ENCODE measurements at regions of chr3 and their contacts with region 1.

Region 1: DNA sequence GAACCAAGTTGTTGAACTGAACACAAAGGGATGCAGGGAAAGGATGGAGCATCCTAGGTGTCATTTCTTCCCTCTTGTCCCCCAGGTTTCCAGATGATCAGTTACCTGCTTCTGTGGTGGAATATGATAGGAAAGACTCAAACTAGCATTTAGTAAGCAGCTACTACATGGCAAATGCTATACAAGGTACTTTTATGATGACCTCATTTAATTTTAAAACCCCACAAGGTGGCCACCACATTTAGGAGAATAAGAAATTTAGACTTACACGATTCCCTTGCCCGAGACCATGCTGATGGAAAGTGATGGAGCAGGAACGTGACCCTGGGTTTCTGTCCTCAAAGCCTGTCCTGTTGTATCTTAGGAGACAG is 40.9 kb downstream of the CCR4 start:
- DNase-seq: no peak
- H3K4me3 Mint-ChIP-seq: peak overlapping the region; percentile 31
- H3K27ac Mint-ChIP-seq: peak overlapping the region; percentile 84
- H3K4me1 Mint-ChIP-seq: peaks cover 54% of the 10 kb centered on the region
- H3K27me3 Mint-ChIP-seq: peaks cover 2% of the 10 kb centered on the region

Region 2: DNA sequence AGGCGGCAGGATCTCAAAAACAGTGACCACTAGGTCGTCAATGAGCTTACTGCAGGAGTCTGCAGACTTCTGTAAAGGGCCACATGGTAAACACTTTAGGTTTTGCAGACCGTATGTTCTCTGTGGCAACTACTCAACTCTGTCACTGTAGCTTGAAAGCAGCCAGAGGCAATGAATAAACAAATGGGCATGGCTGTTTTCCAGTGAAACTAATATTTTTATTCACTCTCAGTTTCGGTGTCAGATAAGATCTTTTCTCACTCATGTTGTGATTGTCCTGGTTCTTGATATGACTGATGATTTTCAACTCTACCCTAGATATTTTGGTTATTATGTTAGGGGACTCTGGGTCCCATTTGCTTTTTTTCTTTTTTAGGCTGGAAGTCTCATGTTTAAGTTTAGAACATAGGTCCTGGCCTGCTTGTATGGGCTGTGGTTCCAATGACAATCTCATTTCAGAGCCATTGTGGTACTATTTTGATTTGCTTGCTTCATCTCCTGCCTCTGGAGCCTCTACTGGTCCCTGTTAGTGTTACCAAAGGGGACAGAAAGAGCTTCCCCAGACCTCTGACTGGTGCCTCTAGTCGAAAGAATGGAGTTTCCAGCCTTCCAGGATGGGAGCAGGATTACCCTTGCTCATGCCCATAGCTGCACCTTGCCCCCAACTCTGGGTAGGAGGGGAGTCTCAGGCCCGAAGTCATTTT is 1237.6 kb before region 1 on chr3:
- CTCF ChIA-PET with region 1: no interaction called
- intact Hi-C with region 1: loop called (anchors 10 kb)
- DNase-seq: no peak
- H3K4me3 Mint-ChIP-seq: no peak overlapping the region
- H3K27ac Mint-ChIP-seq: peak overlapping the region; percentile 94
- H3K4me1 Mint-ChIP-seq: peaks cover 41% of the 10 kb centered on the region
- H3K27me3 Mint-ChIP-seq: peaks cover 2% of the 10 kb centered on the region

Region 3: DNA sequence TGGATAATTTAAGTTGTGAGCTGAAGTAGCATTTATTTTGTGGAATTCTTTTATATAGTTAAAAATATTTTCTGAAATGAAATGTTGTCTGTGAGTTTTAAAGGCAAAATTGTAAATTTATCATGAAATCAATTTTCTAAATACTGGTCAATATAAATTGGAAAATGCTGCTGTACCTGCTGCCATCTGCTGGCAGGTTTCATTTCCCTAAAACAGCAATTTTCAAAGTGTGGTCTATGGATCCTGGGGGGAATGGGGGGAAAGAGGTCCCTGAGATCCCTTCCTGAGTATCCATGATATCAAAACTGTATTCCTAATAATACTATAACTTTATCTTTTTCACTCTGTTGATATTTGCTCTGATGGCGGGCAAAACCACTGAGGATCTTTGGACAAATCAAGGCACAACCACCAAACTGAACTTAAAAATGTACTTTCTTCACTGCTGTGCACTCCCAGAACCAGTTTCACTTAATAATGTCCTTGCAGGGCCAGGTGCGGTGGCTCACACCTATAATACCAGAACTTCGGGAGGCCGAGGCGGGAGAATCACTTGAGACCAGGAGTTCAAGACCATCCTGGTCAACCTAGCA is 58.1 kb before region 1 on chr3:
- CTCF ChIA-PET with region 1: no interaction called
- intact Hi-C with region 1: no loop called
- DNase-seq: peak; percentile 52
- H3K4me3 Mint-ChIP-seq: no peak overlapping the region
- H3K27ac Mint-ChIP-seq: no peak overlapping the region
- H3K4me1 Mint-ChIP-seq: no peaks in the 10 kb centered on the region
- H3K27me3 Mint-ChIP-seq: peaks cover 4% of the 10 kb centered on the region

Region 4: DNA sequence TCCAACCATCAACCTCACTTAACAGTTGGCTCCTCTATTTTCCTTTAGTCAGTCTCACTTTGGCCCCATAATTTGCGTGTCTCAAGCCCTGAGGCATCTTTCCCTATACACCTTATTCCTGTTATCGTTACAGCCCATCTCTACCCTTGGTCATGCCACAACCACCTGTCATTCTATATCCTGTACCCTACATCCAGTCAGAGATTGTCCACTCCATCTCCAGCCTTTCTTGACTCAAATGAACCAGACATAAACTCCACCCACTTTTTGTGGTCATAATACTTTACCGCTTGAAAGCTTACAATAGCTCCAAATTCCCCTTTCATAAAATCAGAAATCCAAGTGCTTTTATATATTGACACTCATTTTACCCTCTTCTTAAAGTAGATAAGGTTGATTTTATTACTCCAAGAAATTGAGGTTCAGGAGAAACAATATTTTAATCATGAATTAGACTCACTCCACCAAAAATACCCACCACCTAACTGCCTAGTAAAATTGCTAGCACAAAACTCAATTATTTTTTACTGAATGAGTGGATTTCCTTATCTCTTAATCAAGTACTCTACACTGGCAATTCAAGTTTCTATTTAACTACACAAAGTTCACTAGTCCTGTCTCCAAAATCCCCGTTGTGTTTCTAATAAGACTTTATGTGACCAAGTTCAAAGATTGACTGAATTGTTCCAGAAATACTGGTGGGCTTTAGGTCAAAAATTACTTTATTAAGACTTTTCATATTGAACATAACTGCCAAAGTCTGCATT is 31.7 kb before region 1 on chr3:
- CTCF ChIA-PET with region 1: interaction called, 6 read pairs
- intact Hi-C with region 1: loop called (anchors 1 kb)
- DNase-seq: no peak
- H3K4me3 Mint-ChIP-seq: no peak overlapping the region
- H3K27ac Mint-ChIP-seq: peak overlapping the region; percentile 75
- H3K4me1 Mint-ChIP-seq: peaks cover 61% of the 10 kb centered on the region
- H3K27me3 Mint-ChIP-seq: no peaks in the 10 kb centered on the region

Region 5: DNA sequence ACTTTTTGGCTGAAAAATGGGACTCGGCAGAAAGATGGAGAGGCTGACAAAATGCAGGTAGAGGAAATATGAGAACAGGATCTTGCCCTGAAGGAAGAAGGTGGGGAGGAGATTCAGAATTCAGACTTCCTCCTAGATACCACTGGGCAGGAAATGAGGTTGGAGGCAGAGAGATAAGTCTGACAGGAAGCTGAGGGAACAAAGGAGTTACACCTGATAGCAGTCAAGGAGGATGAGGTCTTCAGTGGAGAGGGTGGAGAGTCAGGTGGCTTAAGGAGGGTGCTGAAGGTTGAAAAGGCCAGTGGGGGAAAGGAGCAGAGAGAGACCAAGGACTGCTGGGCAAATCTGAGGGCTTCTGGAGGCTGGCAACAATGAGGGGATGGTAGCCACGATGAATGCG is 16.0 kb after region 1 on chr3:
- CTCF ChIA-PET with region 1: no interaction called
- intact Hi-C with region 1: loop called (anchors 1 kb)
- DNase-seq: no peak
- H3K4me3 Mint-ChIP-seq: no peak overlapping the region
- H3K27ac Mint-ChIP-seq: peak overlapping the region; percentile 35
- H3K4me1 Mint-ChIP-seq: peaks cover 25% of the 10 kb centered on the region
- H3K27me3 Mint-ChIP-seq: no peaks in the 10 kb centered on the region

Region 6: GRCh38 chr3:33030802-33031201 is 38.5 kb after region 1 on chr3:
- CTCF ChIA-PET with region 1: interaction called, 3 read pairs
- intact Hi-C with region 1: loop called (anchors 2 kb)
- DNase-seq: peak; percentile 56
- H3K4me3 Mint-ChIP-seq: no peak overlapping the region
- H3K27ac Mint-ChIP-seq: no peak overlapping the region
- H3K4me1 Mint-ChIP-seq: peaks cover 15% of the 10 kb centered on the region
- H3K27me3 Mint-ChIP-seq: no peaks in the 10 kb centered on the region

Region 7: GRCh38 chr3:33096093-33096868 is 104.0 kb after region 1 on chr3:
- CTCF ChIA-PET with region 1: no interaction called
- intact Hi-C with region 1: loop called (anchors 1 kb)
- DNase-seq: peak; percentile 68
- H3K4me3 Mint-ChIP-seq: peak overlapping the region; percentile 98
- H3K27ac Mint-ChIP-seq: peak overlapping the region; percentile 88
- H3K4me1 Mint-ChIP-seq: peaks cover 41% of the 10 kb centered on the region
- H3K27me3 Mint-ChIP-seq: no peaks in the 10 kb centered on the region

Measured in activated naive CD4-positive, alpha-beta T cell treated with anti-CD3 and anti-CD28 coated beads for 36 hours (primary cell).